Posterior vena cava (tissue), 2 donors: ENCODE measurements at regions of chr2 and their contacts with region 1.

Region 1: DNA sequence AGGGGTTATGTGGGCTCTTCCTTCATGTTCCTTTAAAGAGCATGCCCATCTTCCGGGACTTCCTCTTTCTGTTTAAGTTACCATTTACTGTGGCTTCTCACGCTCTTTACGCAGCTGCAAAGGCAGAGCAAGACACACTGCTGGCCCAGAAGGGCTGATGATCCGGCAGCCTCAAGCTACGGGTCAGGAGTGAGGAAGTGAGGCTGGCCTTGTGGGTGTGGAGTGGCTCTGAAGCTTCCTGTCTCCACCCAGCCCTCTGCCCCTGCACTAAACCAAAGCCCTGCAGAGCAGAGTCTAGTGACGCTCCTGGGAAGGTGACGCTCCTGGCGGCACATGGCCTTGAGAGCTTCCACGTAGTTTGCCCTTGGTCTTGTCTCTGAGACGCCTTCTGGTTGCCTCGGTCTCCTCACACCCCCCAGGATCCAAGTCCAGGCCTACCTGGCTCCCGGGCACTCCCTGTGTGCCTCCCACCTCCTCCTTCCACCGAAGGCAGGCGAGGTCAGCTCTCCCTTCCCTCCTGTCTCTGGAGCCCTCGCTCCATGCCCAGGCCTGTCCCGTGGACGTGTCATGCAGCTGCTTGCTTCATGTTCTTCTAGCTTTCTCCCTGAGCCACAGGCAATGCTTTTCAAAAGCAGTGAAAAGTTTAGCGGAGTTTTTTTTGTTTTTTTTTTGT is 50.3 kb downstream of the ARL4C start:
- DNase-seq: peak; percentile 90

Region 2: DNA sequence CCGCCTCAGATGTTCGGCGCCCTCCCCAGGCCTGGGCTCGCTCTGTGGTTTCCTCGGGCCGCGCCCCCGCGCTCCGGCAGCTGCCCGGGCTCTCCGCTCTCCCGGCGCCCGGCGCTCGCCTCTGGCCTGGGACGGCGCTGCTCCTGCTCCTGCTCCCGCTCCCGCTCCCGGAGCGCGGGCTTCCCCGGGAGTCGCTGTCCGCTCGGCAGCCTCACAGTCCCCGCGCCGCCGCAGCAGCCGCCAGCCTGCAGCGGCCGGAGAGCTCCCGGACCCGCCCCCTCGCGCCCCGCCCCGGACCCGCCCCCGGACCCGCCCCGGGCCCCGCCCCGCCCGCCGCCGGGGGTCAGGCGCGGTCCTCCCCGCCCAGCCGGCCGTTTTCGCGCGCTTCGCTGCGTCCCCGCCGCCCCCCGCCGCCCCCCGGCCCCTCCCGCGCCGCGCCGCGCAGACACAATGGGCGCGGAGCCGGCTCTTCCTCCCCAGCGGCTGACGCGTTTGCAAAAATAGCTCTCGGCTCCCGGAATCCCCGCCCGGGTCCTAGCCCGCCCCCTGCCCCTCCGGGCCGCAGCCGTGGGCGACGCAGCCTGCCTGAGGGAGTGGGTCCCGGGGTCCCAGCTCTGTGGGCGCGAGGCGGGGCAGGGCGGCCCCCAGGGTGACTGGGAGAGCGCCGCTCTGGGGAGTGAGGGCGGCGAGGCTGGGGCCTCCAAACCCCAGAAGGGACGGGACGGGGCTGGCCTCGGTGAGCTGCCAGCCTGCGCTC is 50.5 kb after region 1 on chr2 and contains the start of gene ARL4C:
- intact Hi-C with region 1: loop called in 1 of 2 experiments (anchors 10 kb)
- DNase-seq: peak; percentile 90
- total RNA-seq, gene ARL4C: 12.5 to 13.0 TPM

Region 3: DNA sequence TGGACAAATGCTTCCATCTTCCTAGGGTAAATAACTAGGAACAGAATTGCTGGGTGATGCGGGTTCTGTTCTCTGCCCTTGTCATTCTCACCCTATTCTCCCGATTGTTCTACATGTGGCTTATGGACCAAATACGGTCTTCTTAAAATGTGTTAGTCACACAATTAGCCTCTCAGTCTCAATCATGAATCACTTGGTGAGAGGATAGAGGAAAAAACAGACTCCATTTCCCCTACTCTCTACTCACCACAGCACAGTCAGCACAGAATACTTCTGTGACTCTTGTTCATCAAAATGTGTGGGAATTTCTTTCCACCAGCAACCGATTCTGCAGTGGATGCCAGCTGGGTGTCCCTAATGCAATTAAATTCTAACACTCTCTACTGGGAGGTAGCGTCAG is 630.5 kb after region 1 on chr2:
- intact Hi-C with region 1: no loop called
- DNase-seq: no peak

Region 4: DNA sequence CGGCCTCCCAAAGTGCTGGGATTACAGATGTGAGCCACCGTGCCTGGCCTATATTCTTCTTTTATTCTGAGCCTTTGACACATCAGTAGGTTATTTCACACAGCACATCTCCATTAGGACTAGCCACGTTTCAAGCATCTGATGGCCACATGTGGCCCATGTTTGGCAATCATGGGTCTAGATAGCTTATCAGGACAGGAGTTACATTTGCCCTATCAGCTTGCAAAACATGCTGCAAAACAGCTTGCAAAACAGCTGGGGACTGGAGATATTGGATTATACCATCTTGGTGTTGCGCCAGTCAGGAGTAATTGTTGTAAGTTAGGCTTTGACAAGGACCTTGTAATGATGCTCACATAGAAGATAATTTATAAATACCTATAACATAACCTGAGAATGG is 1626.7 kb after region 1 on chr2:
- intact Hi-C with region 1: loop called in 1 of 2 experiments (anchors 5 kb)
- DNase-seq: no peak